ENCODE measurements at regions of chr20 and their contacts with region 1.

Region 1: GRCh38 chr20:496126-496696 is 33.9 kb upstream of the TBC1D20 start:
- DNase-seq: no peak
- H3K4me3 ChIP-seq: no peak overlapping the region
- CTCF ChIP-seq: no peak

Region 2: GRCh38 chr20:483813-484644 is 12.2 kb before region 1 on chr20:
- CTCF ChIA-PET with region 1: interaction called, 10 read pairs
- POLR2A ChIA-PET with region 1: no interaction called
- DNase-seq: no peak
- H3K4me3 ChIP-seq: no peak overlapping the region
- CTCF ChIP-seq: no peak